WTC11 (cell line): ENCODE measurements at regions of chr14 and their contacts with region 1.

Region 1: DNA sequence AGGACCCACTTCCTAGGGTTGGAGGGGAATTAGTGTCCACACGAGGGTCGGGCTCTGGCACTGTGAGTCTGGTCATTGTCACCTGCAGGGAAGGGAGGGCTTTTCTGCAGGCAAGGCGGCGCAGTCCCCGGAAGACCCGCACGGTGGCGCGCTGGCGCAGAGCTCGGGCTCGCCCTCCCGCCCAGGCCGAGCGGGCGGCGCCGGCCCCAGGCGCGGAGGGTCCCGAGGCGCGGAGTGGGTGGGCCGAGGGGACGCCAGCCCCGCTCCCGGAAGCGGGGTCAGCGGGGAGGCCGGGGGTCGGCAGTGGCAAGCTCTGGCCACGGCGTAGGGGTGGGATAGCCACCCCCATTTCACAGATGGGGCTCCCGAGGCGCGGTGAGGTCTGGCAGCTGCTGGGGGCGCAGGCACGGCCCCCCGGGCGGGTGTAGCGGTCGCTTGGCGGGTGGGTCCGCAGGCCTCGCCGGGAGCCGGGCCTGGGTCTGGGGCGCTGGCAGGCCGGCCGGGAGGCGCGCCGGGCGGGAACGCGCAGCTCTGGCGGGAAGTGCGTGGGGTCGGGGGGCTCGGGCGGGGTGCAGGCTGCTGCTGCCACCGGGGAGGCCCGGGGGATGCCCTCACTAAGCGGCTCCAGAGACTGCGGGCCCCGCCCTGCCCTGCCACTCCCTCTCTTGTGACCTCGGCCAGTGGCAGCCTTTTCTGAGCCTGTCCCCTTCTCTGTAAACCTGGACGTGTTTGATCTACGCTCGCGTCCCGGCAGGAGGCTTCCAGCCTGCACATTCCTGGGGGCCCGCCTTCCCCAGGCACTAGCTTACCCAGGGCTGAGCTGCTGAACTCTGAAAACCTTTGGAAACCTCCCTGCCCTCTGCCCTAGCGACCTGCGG is 46.1 kb downstream of the CYP46A1 start:
- DNase-seq: peak; percentile 93
- ATAC-seq: peak; percentile 75
- H3K4me3 Mint-ChIP-seq: peak overlapping the region; percentile 68
- H3K27ac Mint-ChIP-seq: no peak overlapping the region
- H3K4me1 Mint-ChIP-seq: 0 out of 2 replicates have a peak, but pooled peaks cover 2% of the 10 kb centered on the region
- H3K27me3 Mint-ChIP-seq: no peaks in the 10 kb centered on the region
- CTCF ChIP-seq: peak; percentile 89

Region 2: GRCh38 chr14:99683619-99684355 is 46.4 kb before region 1 on chr14 and contains the start of gene CYP46A1:
- CTCF ChIA-PET with region 1: interaction called, 17 read pairs
- POLR2A ChIA-PET with region 1: no interaction called
- DNase-seq: peak; percentile 100
- ATAC-seq: peak; percentile 92
- H3K4me3 Mint-ChIP-seq: peak within 1 kb of the TSS; percentile 79
- H3K27ac Mint-ChIP-seq: no peak within 1 kb of the TSS
- H3K4me1 Mint-ChIP-seq: peaks cover 26% of the 10 kb centered on the region
- H3K27me3 Mint-ChIP-seq: peaks cover 7% of the 10 kb centered on the region
- CTCF ChIP-seq: no peak
- total RNA-seq, gene CYP46A1: 0.57 to 0.77 TPM (median 0.73 TPM) in 3 replicates

Region 3: DNA sequence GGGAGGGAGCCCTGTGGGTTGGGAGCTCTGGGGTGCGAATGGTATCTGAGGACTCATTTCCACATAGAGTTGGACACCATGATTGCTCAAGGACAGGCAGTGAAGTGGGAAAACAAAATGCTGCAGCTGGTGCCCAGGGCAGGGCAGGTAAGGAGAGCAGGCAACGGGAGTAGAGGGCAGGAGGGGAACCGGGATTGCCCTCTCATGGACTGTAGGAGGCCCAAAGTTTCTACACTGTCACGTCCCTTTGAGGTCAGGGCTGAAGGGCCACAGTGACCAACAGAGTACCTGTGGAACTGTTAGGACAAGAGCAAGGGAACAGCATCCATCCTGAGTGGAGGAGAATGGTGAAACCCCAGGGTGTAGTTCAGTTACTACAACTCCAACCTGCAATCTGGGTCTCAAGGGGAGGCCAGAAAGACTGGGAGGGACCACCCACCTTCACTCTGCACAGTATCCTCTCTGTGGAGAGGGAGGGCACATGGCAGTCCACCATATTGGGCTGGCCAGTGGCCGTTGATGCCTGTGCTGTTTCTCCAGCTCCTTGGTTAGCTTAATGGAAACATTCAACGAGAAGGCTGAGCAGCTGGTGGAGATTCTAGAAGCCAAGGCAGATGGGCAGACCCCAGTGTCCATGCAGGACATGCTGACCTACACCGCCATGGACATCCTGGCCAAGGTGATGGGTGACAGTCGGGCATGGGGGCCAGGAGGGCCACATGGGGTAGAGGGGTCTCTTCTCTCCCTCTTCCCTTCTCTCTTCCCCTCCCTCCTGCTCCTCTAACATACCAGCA is 23.9 kb before region 1 on chr14:
- CTCF ChIA-PET with region 1: no interaction called
- POLR2A ChIA-PET with region 1: no interaction called
- DNase-seq: no peak
- ATAC-seq: no peak
- H3K4me3 Mint-ChIP-seq: no peak overlapping the region
- H3K27ac Mint-ChIP-seq: no peak overlapping the region
- H3K4me1 Mint-ChIP-seq: no peaks in the 10 kb centered on the region
- H3K27me3 Mint-ChIP-seq: peaks cover 3% of the 10 kb centered on the region
- CTCF ChIP-seq: no peak

Region 4: GRCh38 chr14:99752486-99753121 is 22.4 kb after region 1 on chr14:
- CTCF ChIA-PET with region 1: interaction called, 21 read pairs
- POLR2A ChIA-PET with region 1: interaction called, 3 read pairs
- DNase-seq: no peak
- ATAC-seq: no peak
- H3K4me3 Mint-ChIP-seq: no peak overlapping the region
- H3K27ac Mint-ChIP-seq: no peak overlapping the region
- H3K4me1 Mint-ChIP-seq: peaks cover 8% of the 10 kb centered on the region
- H3K27me3 Mint-ChIP-seq: no peaks in the 10 kb centered on the region; the same call in 1 of the 2 replicates
- CTCF ChIP-seq: no peak

Region 5: GRCh38 chr14:99793213-99794150 is 63.3 kb after region 1 on chr14 and contains the start of gene EML1:
- CTCF ChIA-PET with region 1: interaction called, 22 read pairs
- POLR2A ChIA-PET with region 1: no interaction called
- DNase-seq: peak; percentile 83
- ATAC-seq: peak; percentile 90
- H3K4me3 Mint-ChIP-seq: peak within 1 kb of the TSS; percentile 74
- H3K27ac Mint-ChIP-seq: no peak within 1 kb of the TSS
- H3K4me1 Mint-ChIP-seq: peaks cover 22% of the 10 kb centered on the region
- H3K27me3 Mint-ChIP-seq: peaks cover 20% of the 10 kb centered on the region
- CTCF ChIP-seq: no peak
- total RNA-seq, gene EML1: 10.9 to 16.1 TPM (median 11.4 TPM) in 3 replicates

Region 6: GRCh38 chr14:99852583-99852982 is 122.4 kb after region 1 on chr14:
- CTCF ChIA-PET with region 1: no interaction called
- POLR2A ChIA-PET with region 1: no interaction called
- DNase-seq: no peak
- ATAC-seq: no peak
- H3K4me3 Mint-ChIP-seq: no peak overlapping the region
- H3K27ac Mint-ChIP-seq: no peak overlapping the region
- H3K4me1 Mint-ChIP-seq: no peaks in the 10 kb centered on the region
- H3K27me3 Mint-ChIP-seq: no peaks in the 10 kb centered on the region; the same call in 1 of the 2 replicates
- CTCF ChIP-seq: no peak

Region 7: DNA sequence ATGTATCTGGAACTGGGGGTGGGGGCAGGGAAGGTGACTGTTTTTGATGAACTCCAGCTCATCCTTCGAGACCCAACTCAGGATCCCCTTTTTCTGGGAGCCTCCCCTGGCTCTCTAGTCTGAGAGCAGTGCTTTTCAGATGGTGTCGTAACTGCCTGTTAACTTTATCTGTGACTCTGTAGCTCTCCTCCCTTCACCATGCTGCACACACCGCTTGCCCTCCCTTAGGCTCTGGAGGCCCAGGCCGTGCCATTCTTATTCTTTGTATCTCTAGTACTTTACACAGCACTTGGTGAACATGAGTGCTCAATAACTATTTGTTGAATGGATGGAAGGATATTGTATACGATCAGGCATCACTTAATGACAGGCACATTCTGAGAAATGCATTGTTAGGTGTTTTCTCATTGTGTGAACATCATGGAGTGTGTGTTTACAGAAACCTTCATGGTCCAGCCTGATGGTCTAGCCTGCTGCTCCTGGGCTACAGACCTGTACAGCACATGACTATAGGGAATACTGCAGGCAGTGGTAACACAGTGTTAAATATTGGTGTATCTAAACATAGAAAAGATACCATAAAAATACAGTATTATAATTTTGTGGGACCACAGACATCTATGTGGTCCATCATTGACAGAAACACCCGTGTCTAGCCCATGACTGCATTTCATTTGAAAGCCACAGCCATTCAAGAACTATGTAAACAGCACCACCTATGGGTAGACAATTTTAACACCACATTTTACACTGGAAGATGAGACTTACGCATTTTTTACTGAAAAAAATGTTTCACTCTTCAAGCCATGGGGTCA is 154.8 kb after region 1 on chr14:
- CTCF ChIA-PET with region 1: interaction called, 22 read pairs
- POLR2A ChIA-PET with region 1: no interaction called
- DNase-seq: no peak
- ATAC-seq: no peak
- H3K4me3 Mint-ChIP-seq: no peak overlapping the region
- H3K27ac Mint-ChIP-seq: no peak overlapping the region
- H3K4me1 Mint-ChIP-seq: peaks cover 32% of the 10 kb centered on the region
- H3K27me3 Mint-ChIP-seq: no peaks in the 10 kb centered on the region; the same call in 1 of the 2 replicates
- CTCF ChIP-seq: peak; percentile 75

Region 8: GRCh38 chr14:99899578-99900178 is 169.4 kb after region 1 on chr14:
- CTCF ChIA-PET with region 1: interaction called, 14 read pairs
- POLR2A ChIA-PET with region 1: no interaction called
- DNase-seq: no peak
- ATAC-seq: no peak
- H3K4me3 Mint-ChIP-seq: no peak overlapping the region
- H3K27ac Mint-ChIP-seq: no peak overlapping the region
- H3K4me1 Mint-ChIP-seq: peaks cover 7% of the 10 kb centered on the region
- H3K27me3 Mint-ChIP-seq: no peaks in the 10 kb centered on the region
- CTCF ChIP-seq: peak; percentile 37